ENCODE measurements at regions of chr13 and their contacts with region 1.

Region 1: GRCh38 chr13:30158774-30159445 is 148.4 kb downstream of the KATNAL1 start:
- DNase-seq: peak in 2 of 5 donors; percentile 48 to 57
- H3K4me3 ChIP-seq: no peak overlapping the region
- H3K4me3 Mint-ChIP-seq: peak overlapping the region in 6 of 7 donors; percentile 15 to 72 (median 58)
- H3K27ac ChIP-seq: no peak overlapping the region
- H3K27ac Mint-ChIP-seq: peak overlapping the region; percentile 43 to 92 (median 80)
- H3K4me1 ChIP-seq: peaks cover 24% of the 10 kb centered on the region
- H3K4me1 Mint-ChIP-seq: peaks cover 51 to 58% (median 57%) of the 10 kb centered on the region in 3 donors
- H3K27me3 ChIP-seq: no peaks in the 10 kb centered on the region
- H3K27me3 Mint-ChIP-seq: no peaks in the 10 kb centered on the region

Region 2: DNA sequence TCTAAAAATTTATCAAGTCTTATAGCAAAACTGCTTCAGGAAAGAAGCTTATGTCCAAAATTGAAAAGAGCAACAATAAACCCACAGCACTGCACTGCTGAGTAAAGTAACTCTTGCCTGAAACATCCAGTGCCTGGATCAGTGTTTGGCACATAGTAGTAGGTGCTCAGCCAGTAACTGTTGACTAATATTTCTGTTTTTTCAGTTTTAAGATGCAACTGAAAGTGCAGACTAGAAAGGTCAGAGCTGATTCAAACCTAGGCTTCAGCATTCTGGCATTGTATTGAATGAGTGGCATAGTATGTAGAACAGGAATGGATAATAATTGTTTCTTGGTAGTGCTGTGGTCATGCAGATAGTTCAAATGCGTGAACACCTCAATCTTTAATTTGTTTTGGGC is 376.1 kb before region 1 on chr13:
- CTCF ChIA-PET with region 1: no interaction called
- POLR2A ChIA-PET with region 1: no interaction called
- DNase-seq: no peak
- H3K4me3 ChIP-seq: no peak overlapping the region
- H3K4me3 Mint-ChIP-seq: no peak overlapping the region
- H3K27ac ChIP-seq: no peak overlapping the region
- H3K27ac Mint-ChIP-seq: peak overlapping the region in 1 of 8 donors; percentile 63
- H3K4me1 ChIP-seq: no peaks in the 10 kb centered on the region
- H3K4me1 Mint-ChIP-seq: peaks cover 38 to 72% (median 64%) of the 10 kb centered on the region in 3 donors
- H3K27me3 ChIP-seq: no peaks in the 10 kb centered on the region
- H3K27me3 Mint-ChIP-seq: no peaks in the 10 kb centered on the region

Region 3: GRCh38 chr13:30002577-30002976 is 156.3 kb before region 1 on chr13:
- CTCF ChIA-PET with region 1: no interaction called
- POLR2A ChIA-PET with region 1: no interaction called
- DNase-seq: no peak
- H3K4me3 ChIP-seq: no peak overlapping the region
- H3K4me3 Mint-ChIP-seq: no peak overlapping the region
- H3K27ac ChIP-seq: no peak overlapping the region
- H3K27ac Mint-ChIP-seq: no peak overlapping the region
- H3K4me1 ChIP-seq: peaks cover 4% of the 10 kb centered on the region
- H3K4me1 Mint-ChIP-seq: peaks cover 4 to 26% (median 19%) of the 10 kb centered on the region in 3 donors
- H3K27me3 ChIP-seq: no peaks in the 10 kb centered on the region
- H3K27me3 Mint-ChIP-seq: peaks cover 3% of the 10 kb centered on the region in 2 donors

Region 4: DNA sequence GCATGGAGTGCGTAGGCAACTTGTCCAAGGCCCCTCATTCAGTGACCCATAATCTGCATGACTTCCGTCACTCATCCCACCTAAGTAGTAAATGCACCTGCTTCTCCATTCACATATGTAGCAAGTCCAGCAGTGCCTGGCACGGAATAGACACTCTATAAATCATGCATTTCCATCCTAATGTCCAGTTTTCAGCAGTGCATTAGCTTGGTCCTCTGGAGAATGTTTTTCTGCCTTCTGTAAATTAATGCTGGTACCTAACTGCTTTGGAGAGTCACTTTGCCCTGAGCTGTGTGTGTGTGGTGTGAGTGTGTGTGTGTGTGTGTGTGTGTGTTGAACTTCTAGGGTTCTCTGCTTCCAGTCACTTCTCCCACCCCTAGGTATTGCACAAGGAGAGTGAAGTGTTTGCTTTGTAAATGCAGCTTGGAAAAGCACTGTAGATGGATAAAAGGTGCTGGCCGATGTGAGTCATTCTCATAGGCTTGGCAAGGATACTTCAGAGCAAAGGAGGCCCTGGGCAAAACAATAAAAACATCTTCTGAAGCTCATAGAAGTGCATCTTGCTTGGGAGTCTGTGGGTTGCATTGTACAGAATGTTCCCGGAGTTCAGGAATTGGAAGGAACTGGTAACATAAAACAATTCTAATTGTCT is 33.4 kb before region 1 on chr13:
- CTCF ChIA-PET with region 1: interaction called, 289 read pairs
- POLR2A ChIA-PET with region 1: no interaction called
- DNase-seq: no peak
- H3K4me3 ChIP-seq: no peak overlapping the region
- H3K4me3 Mint-ChIP-seq: no peak overlapping the region
- H3K27ac ChIP-seq: no peak overlapping the region
- H3K27ac Mint-ChIP-seq: peak overlapping the region in 1 of 8 donors; percentile 18
- H3K4me1 ChIP-seq: peaks cover 12% of the 10 kb centered on the region
- H3K4me1 Mint-ChIP-seq: peaks cover 21 to 39% (median 34%) of the 10 kb centered on the region in 3 donors
- H3K27me3 ChIP-seq: no peaks in the 10 kb centered on the region
- H3K27me3 Mint-ChIP-seq: no peaks in the 10 kb centered on the region

Region 5: DNA sequence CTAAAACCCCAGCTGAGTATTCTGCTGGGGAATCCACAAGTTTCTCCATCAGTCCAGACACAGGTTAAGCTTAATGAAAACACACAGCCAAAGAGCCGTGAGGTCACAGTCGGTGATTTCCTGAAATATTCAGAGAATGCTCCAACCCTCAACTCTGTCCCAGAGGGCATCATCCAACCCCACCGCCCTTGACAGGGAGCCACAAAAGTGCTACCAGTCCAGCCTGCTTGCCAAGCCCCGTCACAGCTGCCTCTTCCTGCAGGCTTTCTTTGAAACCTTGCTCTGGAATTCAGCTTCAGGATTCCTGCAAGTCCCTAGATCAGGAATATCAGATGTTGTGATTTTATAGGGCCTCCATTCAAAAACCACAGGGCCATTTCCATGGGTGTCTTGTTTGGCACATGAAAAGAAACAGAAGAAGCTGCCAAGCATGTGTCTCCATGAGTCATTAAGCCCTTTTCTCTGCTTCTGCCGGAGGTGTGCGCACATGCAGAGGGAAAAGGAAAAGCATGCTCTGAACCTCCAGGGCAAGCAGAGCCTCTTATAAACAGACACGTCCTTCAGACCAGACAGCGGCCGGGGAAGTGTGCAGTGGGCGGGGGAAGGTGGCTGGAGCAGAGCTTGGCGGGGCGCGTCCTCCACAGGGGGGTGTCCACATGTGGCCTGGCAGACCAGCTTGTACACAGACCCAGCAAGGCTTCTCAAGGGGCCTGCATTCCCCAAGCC is 16.3 kb before region 1 on chr13:
- CTCF ChIA-PET with region 1: interaction called, 289 read pairs
- POLR2A ChIA-PET with region 1: interaction called, 23 read pairs
- DNase-seq: no peak
- H3K4me3 ChIP-seq: no peak overlapping the region
- H3K4me3 Mint-ChIP-seq: peak overlapping the region in 5 of 7 donors; percentile 21 to 61 (median 43)
- H3K27ac ChIP-seq: no peak overlapping the region
- H3K27ac Mint-ChIP-seq: peak overlapping the region; percentile 47 to 90 (median 73)
- H3K4me1 ChIP-seq: peaks cover 46% of the 10 kb centered on the region
- H3K4me1 Mint-ChIP-seq: peaks cover 57 to 84% (median 81%) of the 10 kb centered on the region in 3 donors
- H3K27me3 ChIP-seq: no peaks in the 10 kb centered on the region
- H3K27me3 Mint-ChIP-seq: no peaks in the 10 kb centered on the region

Region 6: DNA sequence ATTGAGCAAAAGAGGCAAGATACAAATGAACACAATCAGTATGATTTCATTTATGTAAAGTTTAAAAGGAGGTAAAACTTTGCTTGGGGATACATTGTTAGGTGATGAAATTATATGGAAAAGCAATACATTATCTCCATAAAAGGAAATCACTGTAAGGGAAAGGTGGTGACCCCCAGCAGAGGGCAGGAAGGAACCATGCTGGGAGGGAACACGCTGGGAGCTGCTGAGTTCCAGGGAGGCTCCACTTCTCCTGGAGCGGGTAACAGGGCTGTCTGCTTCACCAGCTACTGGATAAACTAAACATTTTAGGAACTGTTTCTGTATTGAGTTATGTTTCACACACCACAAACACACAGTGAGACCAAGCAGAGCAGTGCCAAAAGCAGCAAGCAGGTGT is 57.2 kb after region 1 on chr13:
- CTCF ChIA-PET with region 1: no interaction called
- POLR2A ChIA-PET with region 1: no interaction called
- DNase-seq: no peak
- H3K4me3 ChIP-seq: no peak overlapping the region
- H3K4me3 Mint-ChIP-seq: no peak overlapping the region
- H3K27ac ChIP-seq: no peak overlapping the region
- H3K27ac Mint-ChIP-seq: peak overlapping the region in 1 of 8 donors; percentile 54
- H3K4me1 ChIP-seq: no peaks in the 10 kb centered on the region
- H3K4me1 Mint-ChIP-seq: no peaks in the 10 kb centered on the region
- H3K27me3 ChIP-seq: no peaks in the 10 kb centered on the region
- H3K27me3 Mint-ChIP-seq: no peaks in the 10 kb centered on the region

Measured in CD8-positive, alpha-beta memory T cell (primary cell).